Dendritic cell treated with granulocyte-macrophage colony-stimulating factor and Interleukin-4, amounts not matched to agents 40 ng/mL and 50 ng/mL, for 4 days (primary cell): ENCODE measurements at regions of chr1 and their contacts with region 1.

Region 1: GRCh38 chr1:117605774-117606648 is at the start of gene TENT5C:
- H3K4me3 Mint-ChIP-seq: peak within 1 kb of the TSS; percentile 89
- H3K27ac Mint-ChIP-seq: peak within 1 kb of the TSS; percentile 69
- H3K4me1 Mint-ChIP-seq: peaks cover 23% of the 10 kb centered on the region
- H3K27me3 Mint-ChIP-seq: peaks cover 58% of the 10 kb centered on the region

Region 2: GRCh38 chr1:117367047-117368018 is 238.7 kb before region 1 on chr1 and contains the start of gene MAN1A2:
- intact Hi-C with region 1: loop called (anchors 2 kb)
- H3K4me3 Mint-ChIP-seq: peak within 1 kb of the TSS; percentile 96
- H3K27ac Mint-ChIP-seq: peak within 1 kb of the TSS; percentile 91
- H3K4me1 Mint-ChIP-seq: peaks cover 48% of the 10 kb centered on the region
- H3K27me3 Mint-ChIP-seq: no peaks in the 10 kb centered on the region

Region 3: GRCh38 chr1:117735045-117735992 is 129.3 kb after region 1 on chr1:
- intact Hi-C with region 1: loop called (anchors 10 kb)
- H3K4me3 Mint-ChIP-seq: peak overlapping the region; percentile 61
- H3K27ac Mint-ChIP-seq: peak overlapping the region; percentile 73
- H3K4me1 Mint-ChIP-seq: peaks cover 12% of the 10 kb centered on the region
- H3K27me3 Mint-ChIP-seq: no peaks in the 10 kb centered on the region